ENCODE measurements at regions of chr17 and their contacts with region 1.

Region 1: GRCh38 chr17:40026816-40027613 is 11.8 kb downstream of the CSF3 start:
- DNase-seq: peak; percentile 49 to 71
- H3K4me3 ChIP-seq: no peak overlapping the region
- H3K27ac ChIP-seq: peak overlapping the region; percentile 70
- H3K4me1 ChIP-seq: peaks cover 52% of the 10 kb centered on the region
- H3K27me3 ChIP-seq: no peaks in the 10 kb centered on the region
- CTCF ChIP-seq: peak; percentile 91

Region 2: GRCh38 chr17:39676198-39676819 is 350.7 kb before region 1 on chr17:
- CTCF ChIA-PET with region 1: no interaction called
- POLR2A ChIA-PET with region 1: no interaction called
- intact Hi-C with region 1: no loop called
- DNase-seq: peak in 1 of 2 experiments; percentile 58
- H3K4me3 ChIP-seq: no peak overlapping the region
- H3K27ac ChIP-seq: peak overlapping the region; percentile 65
- H3K4me1 ChIP-seq: peaks cover 34% of the 10 kb centered on the region
- H3K27me3 ChIP-seq: no peaks in the 10 kb centered on the region
- CTCF ChIP-seq: no peak

Region 3: DNA sequence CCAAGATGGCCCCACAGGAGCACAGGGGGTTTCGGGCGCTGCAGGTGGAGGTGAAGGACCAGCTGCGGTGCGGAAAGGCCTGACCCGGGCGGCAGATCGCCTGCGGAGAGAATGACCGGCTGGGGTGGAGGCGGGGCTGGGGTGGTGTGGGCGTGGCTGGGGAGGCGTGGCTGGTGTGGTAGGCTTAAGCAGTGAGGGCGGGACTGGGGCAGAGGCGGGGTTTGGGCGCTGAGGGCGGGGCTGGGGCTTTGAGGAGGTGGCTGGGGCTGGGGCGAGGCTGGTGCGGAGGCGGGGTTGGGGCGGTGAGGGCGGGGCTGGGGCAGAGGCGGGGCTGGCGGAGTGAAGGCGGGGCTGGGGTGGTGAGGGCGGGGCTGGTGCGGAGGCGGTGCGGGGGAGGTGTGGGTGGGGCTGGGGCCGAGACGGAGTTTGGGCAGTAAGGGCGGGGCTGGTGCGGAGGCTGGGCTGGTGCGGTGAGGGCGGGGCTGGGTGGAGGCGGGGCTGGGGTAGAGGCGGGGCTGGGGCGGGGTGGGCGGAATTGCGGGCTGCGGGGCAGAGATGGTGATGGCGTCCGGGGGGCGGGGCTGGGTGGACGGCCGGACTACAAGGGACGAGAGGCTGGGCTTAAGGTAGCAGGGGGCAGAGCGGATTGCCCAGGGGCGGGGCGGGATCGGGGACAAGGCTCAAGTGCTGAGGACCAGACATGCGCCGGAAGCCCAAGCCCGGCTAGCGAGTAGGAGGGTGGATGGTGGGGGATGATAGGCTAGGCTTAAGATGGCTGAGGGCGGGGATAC is 74.1 kb before region 1 on chr17:
- CTCF ChIA-PET with region 1: no interaction called
- POLR2A ChIA-PET with region 1: no interaction called
- intact Hi-C with region 1: loop called (anchors 2 kb)
- DNase-seq: peak; percentile 80 to 88
- H3K4me3 ChIP-seq: peak overlapping the region; percentile 41; the same call in 1 of the 2 replicates
- H3K27ac ChIP-seq: no peak overlapping the region
- H3K4me1 ChIP-seq: peaks cover 20% of the 10 kb centered on the region
- H3K27me3 ChIP-seq: no peaks in the 10 kb centered on the region
- CTCF ChIP-seq: no peak

Region 4: GRCh38 chr17:40317880-40318829 is 291.1 kb after region 1 on chr17:
- CTCF ChIA-PET with region 1: no interaction called
- POLR2A ChIA-PET with region 1: no interaction called
- intact Hi-C with region 1: loop called (anchors 10 kb)
- DNase-seq: peak; percentile 88 to 90
- H3K4me3 ChIP-seq: peak overlapping the region; percentile 99
- H3K27ac ChIP-seq: peak overlapping the region; percentile 75
- H3K4me1 ChIP-seq: peaks cover 85% of the 10 kb centered on the region
- H3K27me3 ChIP-seq: no peaks in the 10 kb centered on the region
- CTCF ChIP-seq: no peak

Measured in PC-9 (cell line).